Heart right ventricle (tissue), 16 donors: ENCODE measurements at regions of chr18 and their contacts with region 1.

Region 1: DNA sequence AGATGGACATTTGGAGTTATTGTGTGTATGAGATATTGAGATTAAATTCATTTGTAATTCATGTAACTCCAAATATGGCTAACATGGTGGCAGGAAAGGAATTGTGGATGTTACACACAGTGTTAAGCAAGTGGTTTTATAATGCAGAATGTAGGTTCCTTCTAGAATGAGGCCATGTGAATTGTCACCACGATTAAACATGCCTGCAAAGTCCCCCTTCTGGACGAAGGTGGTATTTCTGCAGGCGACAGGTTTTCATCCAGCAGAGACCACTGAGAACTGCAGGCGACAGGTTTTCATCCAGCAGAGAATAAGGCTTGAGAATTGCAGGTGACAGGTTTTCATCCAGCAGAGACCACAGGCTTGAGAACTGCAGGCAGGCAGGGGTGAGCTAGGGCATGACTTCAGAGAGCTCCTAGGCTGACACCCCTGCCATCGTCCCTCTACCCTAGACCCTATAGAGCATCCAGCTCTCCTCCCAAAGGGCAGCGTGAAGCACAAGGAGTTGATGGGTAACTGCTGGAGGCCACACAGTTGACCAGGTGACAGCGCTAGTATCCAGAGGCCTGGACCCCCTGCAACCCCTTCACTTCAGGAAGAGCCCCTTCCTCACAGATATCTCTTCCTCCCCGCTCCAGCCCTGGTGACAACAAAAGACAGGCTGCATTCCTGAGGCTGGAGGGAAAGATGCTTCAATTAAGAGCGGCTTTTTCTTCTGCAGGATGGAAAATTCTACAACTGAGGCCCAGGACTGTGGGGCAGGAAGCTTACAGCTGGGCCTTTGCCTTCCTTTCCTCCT is 175.8 kb downstream of the LOXHD1 start:
- DNase-seq: peak in 1 of 2 donors; percentile 42
- ATAC-seq: peak in 6 of 8 donors; percentile 23 to 64 (median 60)
- H3K4me3 ChIP-seq: no peak overlapping the region
- H3K27ac ChIP-seq: no peak overlapping the region
- H3K4me1 ChIP-seq: peaks cover 0 to 9% (median 0%) of the 10 kb centered on the region in 9 donors
- H3K27me3 ChIP-seq: no peaks in the 10 kb centered on the region
- CTCF ChIP-seq: peak; percentile 55 to 81 (median 75)

Region 2: GRCh38 chr18:46167971-46168370 is 313.3 kb before region 1 on chr18:
- intact Hi-C with region 1: loop called in 4 of 10 experiments (anchors 5 to 10 kb)
- DNase-seq: no peak
- ATAC-seq: peak in 1 of 8 donors; percentile 25
- H3K4me3 ChIP-seq: peak overlapping the region in 1 of 10 donors; percentile 16
- H3K27ac ChIP-seq: no peak overlapping the region
- H3K4me1 ChIP-seq: peaks cover 0 to 9% (median 2%) of the 10 kb centered on the region in 9 donors
- H3K27me3 ChIP-seq: no peaks in the 10 kb centered on the region
- CTCF ChIP-seq: no peak

Region 3: DNA sequence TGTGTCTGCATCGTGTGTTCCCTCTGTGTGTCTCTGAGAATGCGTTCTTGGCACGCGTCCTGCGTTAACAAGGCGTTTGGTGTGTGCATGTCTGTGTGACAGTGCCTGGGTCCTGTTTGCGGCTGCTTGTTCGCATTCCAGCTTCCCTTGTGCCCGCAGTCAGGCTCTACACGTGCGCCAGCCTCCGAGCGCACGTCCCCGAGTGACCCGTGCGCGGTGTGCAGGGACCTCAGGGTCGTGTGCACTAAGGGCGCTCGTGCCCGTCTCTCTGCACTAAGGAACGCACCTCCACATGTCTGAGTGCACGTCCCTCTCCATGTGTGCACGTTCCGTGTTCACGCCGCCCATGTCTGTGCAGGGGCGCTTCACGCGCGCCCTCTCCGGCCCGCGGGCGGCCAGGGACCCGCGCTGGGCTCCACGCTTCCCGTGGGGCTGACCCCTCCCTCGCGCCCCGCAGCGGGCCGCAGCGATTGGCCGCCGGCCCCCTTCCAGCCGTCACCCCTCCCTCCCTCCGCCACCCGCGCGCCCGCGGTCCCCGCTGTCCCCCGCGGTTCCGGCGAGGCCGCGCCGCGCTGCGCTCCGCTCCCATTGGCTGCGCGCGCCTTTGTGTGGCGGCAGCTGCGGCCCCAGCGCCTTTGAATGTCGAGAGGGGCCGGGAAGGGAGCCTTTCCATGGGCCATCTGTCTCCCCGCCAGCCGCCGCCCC is 147.7 kb before region 1 on chr18:
- intact Hi-C with region 1: loop called in 2 of 10 experiments (anchors 5 kb)
- DNase-seq: peak; percentile 42 to 64
- ATAC-seq: peak; percentile 66 to 84 (median 74)
- H3K4me3 ChIP-seq: peak overlapping the region; percentile 38 to 85 (median 66)
- H3K27ac ChIP-seq: peak overlapping the region in 6 of 10 donors; percentile 32 to 77 (median 65)
- H3K4me1 ChIP-seq: peaks cover 10 to 46% (median 33%) of the 10 kb centered on the region in 9 donors
- H3K27me3 ChIP-seq: peaks cover 0 to 64% (median 0%) of the 10 kb centered on the region in 7 donors
- CTCF ChIP-seq: peak in 1 of 9 donors; percentile 4

Region 4: DNA sequence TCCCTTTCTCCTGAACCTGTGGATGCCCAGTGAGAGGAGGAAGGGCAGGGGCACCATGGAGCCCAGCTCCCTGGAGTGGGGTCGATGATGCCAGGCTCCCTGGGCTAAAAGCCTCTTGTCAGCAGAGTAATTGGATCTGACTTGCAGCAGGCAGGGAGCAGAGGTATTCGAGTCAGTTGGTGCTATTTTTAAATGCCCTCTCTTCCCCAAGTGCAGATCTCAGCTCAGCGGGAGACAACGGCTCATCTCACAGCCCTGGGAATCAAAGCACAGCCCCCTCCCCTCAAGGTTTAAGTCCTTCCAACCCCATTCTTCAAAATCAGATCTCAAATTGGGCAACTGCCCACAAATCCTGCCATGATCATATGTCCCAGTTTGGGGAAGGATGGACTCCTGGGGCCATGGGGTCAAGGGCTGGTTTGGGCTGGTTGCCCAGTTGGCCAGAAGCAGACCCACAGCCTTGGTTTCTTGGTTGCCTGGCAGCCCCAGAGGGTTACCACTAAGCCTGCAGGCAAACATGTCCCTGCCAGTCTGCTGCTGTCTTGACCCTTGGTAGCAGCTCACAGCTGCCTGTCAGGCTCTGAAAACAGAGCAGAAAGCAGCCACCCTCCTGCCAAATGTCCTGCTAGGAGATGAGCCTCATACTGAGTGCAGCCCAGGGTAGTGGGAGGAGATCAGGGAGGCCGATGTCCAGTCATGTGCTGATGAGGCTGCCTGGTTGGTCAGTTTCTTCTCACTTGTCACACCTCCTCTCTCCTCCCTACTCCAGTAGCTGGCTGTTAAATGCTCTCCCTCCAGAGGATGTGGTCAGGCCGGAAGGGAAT is 69.2 kb before region 1 on chr18:
- intact Hi-C with region 1: loop called in 1 of 10 experiments (anchors 10 kb)
- DNase-seq: peak; percentile 40 to 63
- ATAC-seq: peak; percentile 68 to 88 (median 82)
- H3K4me3 ChIP-seq: peak overlapping the region in 1 of 10 donors; percentile 9
- H3K27ac ChIP-seq: peak overlapping the region; percentile 61 to 94 (median 86)
- H3K4me1 ChIP-seq: peaks cover 5 to 90% (median 55%) of the 10 kb centered on the region in 9 donors
- H3K27me3 ChIP-seq: no peaks in the 10 kb centered on the region
- CTCF ChIP-seq: no peak

Region 5: GRCh38 chr18:46452820-46453219 is 28.4 kb before region 1 on chr18:
- intact Hi-C with region 1: no loop called
- DNase-seq: no peak
- ATAC-seq: no peak
- H3K4me3 ChIP-seq: no peak overlapping the region
- H3K27ac ChIP-seq: no peak overlapping the region
- H3K4me1 ChIP-seq: no peaks in the 10 kb centered on the region
- H3K27me3 ChIP-seq: no peaks in the 10 kb centered on the region
- CTCF ChIP-seq: no peak

Region 6: GRCh38 chr18:47970664-47971531 is 1489.7 kb after region 1 on chr18:
- intact Hi-C with region 1: no loop called
- DNase-seq: no peak
- ATAC-seq: no peak
- H3K4me3 ChIP-seq: no peak overlapping the region
- H3K27ac ChIP-seq: no peak overlapping the region
- H3K4me1 ChIP-seq: peaks cover 0 to 11% (median 0%) of the 10 kb centered on the region in 9 donors
- H3K27me3 ChIP-seq: peaks cover 0 to 7% (median 0%) of the 10 kb centered on the region in 7 donors
- CTCF ChIP-seq: no peak